ENCODE measurements at regions of chr6 and their contacts with region 1.

Region 1: GRCh38 chr6:75526502-75527127 is 33.0 kb upstream of the FILIP1 start:
- DNase-seq: no peak
- H3K4me3 ChIP-seq: no peak overlapping the region
- CTCF ChIP-seq: peak; percentile 44

Region 2: DNA sequence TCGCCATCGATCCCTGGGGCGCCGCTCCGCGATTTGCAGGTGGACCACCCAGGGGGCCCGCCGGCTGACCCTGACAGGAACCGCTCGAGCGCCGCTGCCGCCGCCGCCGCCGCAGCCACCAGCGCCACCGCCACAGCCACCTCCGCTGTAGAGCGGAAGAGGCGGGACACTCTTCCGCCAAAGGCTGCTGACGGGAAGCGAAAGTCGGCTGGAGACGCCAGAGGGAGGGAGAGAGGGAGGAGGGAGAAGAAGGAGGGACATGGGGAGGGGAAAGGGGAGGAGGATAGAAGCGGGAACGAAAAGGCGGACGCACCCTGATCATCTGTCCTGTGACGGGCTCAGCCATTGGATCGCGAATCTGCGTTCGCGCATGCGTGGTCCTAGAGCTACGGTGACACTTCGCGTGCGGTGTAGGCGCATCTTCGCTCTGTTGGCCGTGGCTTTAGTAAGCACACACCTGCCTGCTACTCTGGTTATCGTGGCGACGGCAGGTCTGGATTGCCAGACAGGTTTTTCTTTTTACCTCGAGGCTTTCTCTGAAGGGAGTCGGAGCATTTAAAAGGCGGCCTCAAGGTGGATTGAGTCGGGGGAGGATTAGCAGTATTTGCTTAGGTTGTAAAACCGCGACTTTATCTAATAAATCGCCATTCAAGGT is 241.9 kb before region 1 on chr6 and contains the start of gene TMEM30A:
- CTCF ChIA-PET with region 1: interaction called, 10 read pairs
- POLR2A ChIA-PET with region 1: no interaction called
- DNase-seq: peak; percentile 95
- H3K4me3 ChIP-seq: peak within 1 kb of the TSS; percentile 84
- CTCF ChIP-seq: peak; percentile 17

Region 3: GRCh38 chr6:75546381-75546780 is 19.8 kb after region 1 on chr6:
- CTCF ChIA-PET with region 1: interaction called, 13 read pairs
- POLR2A ChIA-PET with region 1: no interaction called
- DNase-seq: no peak
- H3K4me3 ChIP-seq: no peak overlapping the region
- CTCF ChIP-seq: no peak

Measured in AG04449 (cell line).